ENCODE measurements at regions of chr1 and their contacts with region 1.

Region 1: DNA sequence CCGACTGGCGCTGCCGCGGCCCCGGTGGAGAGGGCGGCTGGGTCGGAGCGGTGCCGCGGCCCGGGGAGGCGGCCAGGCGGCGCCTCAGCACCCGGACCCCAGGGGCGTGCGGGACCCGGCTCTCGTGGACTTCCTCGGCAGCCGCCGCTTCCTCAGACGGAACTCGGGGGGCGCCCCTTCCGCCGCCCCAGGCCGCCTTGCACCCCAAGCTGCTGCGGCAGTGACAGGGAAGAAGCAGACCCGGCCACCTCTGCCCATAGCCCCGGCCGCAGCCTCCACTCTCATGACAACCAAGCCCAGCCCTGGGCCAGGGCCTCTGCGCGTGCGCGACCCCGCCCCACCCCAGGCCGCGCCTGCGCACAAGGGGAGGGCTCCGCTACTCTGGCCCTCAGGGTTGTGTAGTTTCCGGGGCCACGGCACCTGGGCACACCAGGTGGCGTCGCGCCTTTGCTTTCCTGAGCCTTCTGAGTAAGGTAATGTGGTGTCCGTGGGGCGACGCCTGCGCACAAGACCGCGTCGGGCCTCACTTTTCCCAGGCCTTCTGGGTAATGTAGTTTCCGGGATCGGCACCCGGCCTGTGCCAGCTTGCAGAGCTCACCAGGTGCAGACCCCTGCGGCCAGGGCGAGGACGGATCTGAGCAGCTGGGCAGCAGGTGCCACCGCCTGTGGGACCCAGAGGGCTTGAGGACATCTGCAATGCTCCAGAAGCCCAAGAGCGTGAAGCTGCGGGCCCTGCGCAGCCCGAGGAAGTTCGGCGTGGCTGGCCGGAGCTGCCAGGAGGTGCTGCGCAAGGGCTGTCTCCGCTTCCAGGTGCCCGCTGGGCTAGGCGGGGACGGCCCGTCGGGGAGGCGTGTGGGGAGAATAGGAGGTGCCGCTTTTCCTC is at the starts of genes CEP104 and DFFB:
- H3K4me3 ChIP-seq: peak within 1 kb of the TSS; percentile 88
- H3K27ac ChIP-seq: peak within 1 kb of the TSS; percentile 72; the same call in 1 of the 2 replicates
- H3K4me1 ChIP-seq: no peaks in the 10 kb centered on the region; the same call in 1 of the 2 replicates
- CTCF ChIP-seq: peak; percentile 92

Region 2: GRCh38 chr1:3900119-3900968 is 43.2 kb after region 1 on chr1 and contains the start of gene C1orf174:
- CTCF ChIA-PET with region 1: no interaction called
- POLR2A ChIA-PET with region 1: interaction called, 12 read pairs
- H3K4me3 ChIP-seq: peak within 1 kb of the TSS; percentile 90
- H3K27ac ChIP-seq: peak within 1 kb of the TSS; percentile 81
- H3K4me1 ChIP-seq: no peaks in the 10 kb centered on the region
- CTCF ChIP-seq: no peak

Measured in HEK293 (cell line).